Activated CD8-positive, alpha-beta memory T cell treated with anti-CD3 and anti-CD28 coated beads, Interleukin-2, amount 10 ng/mL, durations not matched to agents 7 days and 5 days (primary cell): ENCODE measurements at regions of chr12 and their contacts with region 1.

Region 1: DNA sequence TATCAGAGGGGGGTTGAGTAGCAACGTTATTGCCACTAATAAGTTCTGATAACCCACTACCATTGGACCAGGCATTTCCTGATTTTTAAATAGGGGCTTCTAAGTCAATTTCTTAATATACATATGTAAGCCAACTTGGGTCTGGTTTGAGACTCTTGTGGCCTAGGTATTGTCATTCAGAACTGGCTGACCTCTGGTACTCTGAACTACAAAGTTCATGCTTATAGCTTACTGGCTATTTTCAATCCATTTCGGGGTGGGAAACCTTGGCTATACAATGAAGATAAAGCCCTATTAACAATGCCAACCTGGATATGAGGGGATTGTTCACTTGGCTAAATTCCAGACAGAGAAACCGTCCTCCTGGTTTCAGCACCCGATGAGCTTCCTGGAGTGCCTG is 8.7 kb downstream of the DYNLL1 start:
- DNase-seq: no peak
- ATAC-seq: no peak
- H3K4me3 Mint-ChIP-seq: no peak overlapping the region
- H3K27ac Mint-ChIP-seq: no peak overlapping the region
- H3K4me1 Mint-ChIP-seq: no peaks in the 10 kb centered on the region
- H3K27me3 Mint-ChIP-seq: no peaks in the 10 kb centered on the region

Region 2: DNA sequence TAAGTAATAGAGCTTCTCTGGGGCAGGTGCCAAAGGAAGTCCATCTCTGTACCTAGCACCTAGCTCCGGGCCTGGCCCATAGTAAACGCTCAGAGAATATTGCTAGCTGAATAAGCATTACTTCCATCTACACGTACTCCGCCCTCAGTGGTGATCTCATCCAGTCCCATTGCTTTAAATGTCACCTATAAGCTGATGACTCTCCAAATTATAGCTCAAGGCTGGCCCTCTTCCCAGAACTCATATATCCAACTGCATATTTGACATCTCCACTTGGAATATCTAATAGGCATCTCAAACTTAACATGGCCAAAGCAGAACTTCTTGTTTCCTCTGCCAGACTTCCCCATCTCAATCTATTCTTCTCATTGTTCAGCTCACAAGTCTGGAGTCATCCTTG is 15.6 kb before region 1 on chr12:
- CTCF ChIA-PET with region 1: interaction called, 10 read pairs
- DNase-seq: no peak
- ATAC-seq: no peak
- H3K4me3 Mint-ChIP-seq: no peak overlapping the region
- H3K27ac Mint-ChIP-seq: no peak overlapping the region
- H3K4me1 Mint-ChIP-seq: no peaks in the 10 kb centered on the region
- H3K27me3 Mint-ChIP-seq: no peaks in the 10 kb centered on the region

Region 3: DNA sequence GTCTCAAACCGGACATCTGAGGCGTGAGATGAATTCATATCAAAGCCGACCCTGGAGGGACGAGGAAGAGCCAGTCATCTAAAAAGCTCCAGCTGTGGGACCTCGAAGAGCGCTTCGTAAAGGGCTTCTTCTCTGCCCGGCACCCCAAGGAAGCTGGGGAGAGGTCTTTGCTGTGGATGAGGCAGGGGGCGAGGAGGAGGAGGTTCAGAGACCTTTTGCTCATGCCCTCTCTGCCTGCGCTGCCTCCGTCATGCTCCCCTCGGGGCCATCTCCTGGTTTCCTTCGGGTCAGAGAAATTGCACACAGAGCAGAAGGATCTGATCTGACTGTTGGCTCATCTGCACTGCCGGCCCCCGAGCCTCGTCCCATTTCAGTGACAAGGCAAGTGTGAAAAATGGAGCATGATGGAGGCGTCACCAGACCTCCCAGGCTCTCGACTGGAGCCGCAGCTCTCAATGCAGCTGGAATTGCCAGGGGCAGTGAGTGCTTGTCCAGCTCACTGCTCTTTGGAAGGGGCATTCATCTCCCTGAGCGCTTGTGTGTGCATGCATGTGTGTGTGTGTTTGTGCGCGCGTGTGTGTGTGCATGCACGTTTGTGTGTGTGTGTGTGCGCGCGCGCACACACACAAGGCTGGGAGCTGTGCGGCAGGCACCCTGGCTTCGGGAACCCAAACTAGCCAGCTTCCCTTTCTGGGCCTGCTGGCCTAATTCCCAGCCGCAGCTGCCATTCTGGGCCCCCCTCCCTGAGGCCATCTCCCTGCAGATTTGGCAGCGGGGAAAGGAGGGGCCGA is 145.1 kb after region 1 on chr12:
- CTCF ChIA-PET with region 1: no interaction called
- DNase-seq: no peak
- ATAC-seq: no peak
- H3K4me3 Mint-ChIP-seq: peak overlapping the region; percentile 30
- H3K27ac Mint-ChIP-seq: no peak overlapping the region
- H3K4me1 Mint-ChIP-seq: peaks cover 20% of the 10 kb centered on the region
- H3K27me3 Mint-ChIP-seq: peaks cover 64% of the 10 kb centered on the region